A673 (cell line): ENCODE measurements at regions of chr10 and their contacts with region 1.

Region 1: DNA sequence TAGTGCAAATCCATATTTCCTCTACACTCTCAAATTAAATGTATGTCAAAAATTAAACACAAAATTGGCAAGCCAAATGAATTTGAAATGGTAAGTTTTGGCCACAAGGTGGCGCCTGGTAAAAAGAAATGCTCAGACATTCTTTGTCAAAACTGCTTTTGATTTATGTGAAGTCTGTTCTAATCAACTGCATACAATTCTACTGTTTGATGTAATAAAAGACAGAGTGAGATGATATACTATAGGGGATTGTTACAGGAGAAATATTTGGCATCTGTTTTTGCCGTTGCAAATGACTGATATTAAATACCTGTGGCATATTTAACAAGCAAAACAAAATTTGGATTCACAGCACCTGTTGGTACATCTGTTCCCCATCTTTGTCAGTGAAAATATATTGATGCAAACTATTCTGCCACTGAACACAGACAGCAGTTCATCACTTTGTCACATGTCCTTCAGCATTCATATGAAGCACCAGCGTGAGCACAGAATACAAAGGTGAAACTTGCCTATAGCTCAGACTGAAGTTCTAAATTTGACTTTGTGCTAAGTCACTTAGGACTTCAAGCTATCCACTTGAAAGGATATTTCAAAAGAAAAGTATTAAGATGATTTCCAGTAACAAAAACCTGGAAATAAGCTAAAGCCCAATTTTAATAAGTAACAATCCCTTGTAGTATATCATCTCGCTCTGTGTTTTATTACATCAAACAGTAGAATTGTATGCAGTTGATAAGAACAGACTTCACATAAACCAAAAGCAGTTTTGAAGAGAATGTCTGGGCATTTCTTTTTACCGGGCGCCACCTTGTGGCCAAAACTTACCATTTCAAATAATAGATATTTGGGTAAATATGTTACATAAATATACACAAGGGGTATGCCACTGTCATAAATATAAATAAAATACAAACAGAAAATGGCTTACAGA is 10.2 kb upstream of the CH25H start:
- DNase-seq: peak; percentile 80
- H3K4me3 ChIP-seq: no peak overlapping the region
- H3K27ac ChIP-seq: no peak overlapping the region
- H3K4me1 ChIP-seq: peaks cover 6% of the 10 kb centered on the region
- H3K27me3 ChIP-seq: no peaks in the 10 kb centered on the region
- CTCF ChIP-seq: peak; percentile 80

Region 2: GRCh38 chr10:88565072-88565471 is 652.3 kb before region 1 on chr10:
- CTCF ChIA-PET with region 1: no interaction called
- POLR2A ChIA-PET with region 1: no interaction called
- intact Hi-C with region 1: loop called (anchors 5 kb)
- DNase-seq: peak; percentile 64
- H3K4me3 ChIP-seq: no peak overlapping the region
- H3K27ac ChIP-seq: no peak overlapping the region
- H3K4me1 ChIP-seq: no peaks in the 10 kb centered on the region
- H3K27me3 ChIP-seq: no peaks in the 10 kb centered on the region
- CTCF ChIP-seq: peak; percentile 58

Region 3: GRCh38 chr10:88835096-88835909 is 382.0 kb before region 1 on chr10:
- CTCF ChIA-PET with region 1: no interaction called
- POLR2A ChIA-PET with region 1: no interaction called
- intact Hi-C with region 1: loop called (anchors 1 kb)
- DNase-seq: peak; percentile 93
- H3K4me3 ChIP-seq: no peak overlapping the region
- H3K27ac ChIP-seq: no peak overlapping the region
- H3K4me1 ChIP-seq: no peaks in the 10 kb centered on the region
- H3K27me3 ChIP-seq: no peaks in the 10 kb centered on the region
- CTCF ChIP-seq: peak; percentile 95

Region 4: GRCh38 chr10:89029785-89030437 is 187.4 kb before region 1 on chr10:
- CTCF ChIA-PET with region 1: interaction called, 6 read pairs
- POLR2A ChIA-PET with region 1: interaction called, 3 read pairs
- intact Hi-C with region 1: loop called (anchors 1 kb)
- DNase-seq: peak; percentile 83
- H3K4me3 ChIP-seq: no peak overlapping the region
- H3K27ac ChIP-seq: no peak overlapping the region
- H3K4me1 ChIP-seq: peaks cover 20% of the 10 kb centered on the region
- H3K27me3 ChIP-seq: no peaks in the 10 kb centered on the region
- CTCF ChIP-seq: peak; percentile 89

Region 5: DNA sequence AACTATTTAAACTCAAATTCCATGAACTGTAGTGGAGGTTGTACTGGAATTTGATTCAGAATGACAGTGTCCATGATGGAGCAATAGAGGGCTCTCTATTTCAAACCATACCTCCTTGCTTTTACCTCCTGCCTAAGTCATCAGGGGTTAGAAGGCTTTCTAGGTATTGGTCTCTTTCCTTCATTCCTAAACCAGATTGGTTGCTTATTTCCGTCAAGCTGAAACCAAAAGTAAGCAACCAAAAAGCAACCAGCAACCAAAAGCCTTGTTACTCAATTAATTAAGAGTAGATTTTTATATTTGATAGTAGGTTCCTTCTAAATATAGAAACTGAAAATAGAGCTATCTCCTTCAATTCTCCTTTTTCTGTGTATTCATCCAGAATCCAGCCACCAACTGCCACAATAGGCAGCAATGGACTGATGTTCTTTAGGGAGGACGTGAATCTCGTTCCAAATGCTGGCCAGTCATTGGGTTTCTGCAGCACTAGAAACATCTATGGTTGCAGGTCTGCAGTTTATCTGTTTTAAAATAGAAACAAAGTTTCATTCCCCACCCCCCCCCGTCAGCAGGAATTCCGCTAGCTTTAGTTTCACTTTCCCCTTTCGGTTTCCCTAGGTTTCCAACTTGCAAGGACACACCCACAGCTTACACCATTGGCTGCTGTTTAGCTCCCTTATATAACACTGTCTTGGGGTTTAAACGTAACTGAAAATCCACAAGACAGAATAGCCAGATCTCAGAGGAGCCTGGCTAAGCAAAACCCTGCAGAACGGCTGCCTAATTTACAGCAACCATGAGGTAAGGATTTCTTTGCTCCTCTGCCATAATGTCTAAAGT is 174.8 kb after region 1 on chr10 and contains the start of gene IFIT1:
- CTCF ChIA-PET with region 1: no interaction called
- POLR2A ChIA-PET with region 1: no interaction called
- intact Hi-C with region 1: loop called (anchors 1 kb)
- DNase-seq: peak; percentile 82
- H3K4me3 ChIP-seq: peak within 1 kb of the TSS; percentile 51
- H3K27ac ChIP-seq: peak within 1 kb of the TSS; percentile 31
- H3K4me1 ChIP-seq: no peaks in the 10 kb centered on the region
- H3K27me3 ChIP-seq: no peaks in the 10 kb centered on the region
- CTCF ChIP-seq: no peak
- total RNA-seq, gene IFIT1: 2.4 and 3.2 TPM in 2 replicates

Region 6: GRCh38 chr10:89563861-89564478 is 346.6 kb after region 1 on chr10:
- CTCF ChIA-PET with region 1: no interaction called
- POLR2A ChIA-PET with region 1: no interaction called
- intact Hi-C with region 1: loop called (anchors 5 kb)
- DNase-seq: peak; percentile 63
- H3K4me3 ChIP-seq: no peak overlapping the region
- H3K27ac ChIP-seq: no peak overlapping the region
- H3K4me1 ChIP-seq: no peaks in the 10 kb centered on the region
- H3K27me3 ChIP-seq: no peaks in the 10 kb centered on the region
- CTCF ChIP-seq: peak; percentile 83